Sigmoid colon (tissue), 7 donors: ENCODE measurements at regions of chr1 and their contacts with region 1.

Region 1: GRCh38 chr1:209576798-209577197 is 6.7 kb upstream of the CAMK1G start:
- DNase-seq: peak; percentile 86
- H3K4me3 ChIP-seq: no peak overlapping the region
- H3K27ac ChIP-seq: no peak overlapping the region
- H3K4me1 ChIP-seq: no peaks in the 10 kb centered on the region
- H3K27me3 ChIP-seq: peaks cover 0 to 20% (median 4%) of the 10 kb centered on the region in 3 donors
- CTCF ChIP-seq: peak; percentile 78 to 94 (median 89)
- EP300 ChIP-seq: no peak
- POLR2A ChIP-seq: no peak

Region 2: GRCh38 chr1:209627732-209628196 is 51.0 kb after region 1 on chr1:
- intact Hi-C with region 1: loop called (anchors 5 kb)
- DNase-seq: peak; percentile 79
- H3K4me3 ChIP-seq: no peak overlapping the region
- H3K27ac ChIP-seq: no peak overlapping the region
- H3K4me1 ChIP-seq: peaks cover 0 to 9% (median 5%) of the 10 kb centered on the region in 4 donors
- H3K27me3 ChIP-seq: no peaks in the 10 kb centered on the region
- CTCF ChIP-seq: peak; percentile 68 to 91 (median 73)
- EP300 ChIP-seq: no peak
- POLR2A ChIP-seq: no peak

Region 3: GRCh38 chr1:209747580-209748262 is 170.9 kb after region 1 on chr1:
- intact Hi-C with region 1: loop called (anchors 1 kb)
- DNase-seq: peak; percentile 95
- H3K4me3 ChIP-seq: peak overlapping the region; percentile 9 to 41 (median 30)
- H3K27ac ChIP-seq: no peak overlapping the region
- H3K4me1 ChIP-seq: peaks cover 0 to 9% (median 4%) of the 10 kb centered on the region in 4 donors
- H3K27me3 ChIP-seq: no peaks in the 10 kb centered on the region
- CTCF ChIP-seq: peak; percentile 84 to 97 (median 87)
- EP300 ChIP-seq: no peak
- POLR2A ChIP-seq: no peak